ENCODE measurements at regions of chr11 and their contacts with region 1.

Region 1: GRCh38 chr11:122584670-122585069 is 70.9 kb upstream of the UBASH3B start:
- DNase-seq: no peak
- H3K4me3 ChIP-seq: no peak overlapping the region
- H3K27ac ChIP-seq: no peak overlapping the region
- H3K4me1 ChIP-seq: peaks cover 0 to 5% (median 2%) of the 10 kb centered on the region in 4 donors
- H3K27me3 ChIP-seq: no peaks in the 10 kb centered on the region
- CTCF ChIP-seq: no peak
- EP300 ChIP-seq: no peak
- POLR2A ChIP-seq: no peak

Region 2: DNA sequence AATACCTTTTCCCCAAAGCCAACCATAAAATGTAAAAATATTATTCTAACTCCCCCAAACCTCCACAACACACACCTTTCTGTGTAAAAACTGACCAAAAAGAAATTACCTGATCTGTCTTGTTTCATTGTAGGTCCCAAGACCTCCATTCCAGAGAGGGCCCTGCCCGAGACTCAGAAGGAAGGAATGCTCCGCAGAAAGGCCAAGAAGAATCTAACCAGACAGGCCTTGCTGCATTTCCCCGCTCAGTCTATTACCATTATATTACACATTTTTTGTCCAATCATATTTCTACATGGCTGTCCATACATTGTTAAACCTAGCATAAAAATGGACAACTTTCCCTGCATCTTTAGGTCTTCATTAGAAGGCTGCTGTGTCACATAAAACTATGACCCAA is 166.6 kb before region 1 on chr11:
- intact Hi-C with region 1: no loop called
- DNase-seq: no peak
- H3K4me3 ChIP-seq: no peak overlapping the region
- H3K27ac ChIP-seq: no peak overlapping the region
- H3K4me1 ChIP-seq: no peaks in the 10 kb centered on the region
- H3K27me3 ChIP-seq: no peaks in the 10 kb centered on the region
- CTCF ChIP-seq: no peak
- EP300 ChIP-seq: no peak
- POLR2A ChIP-seq: no peak

Region 3: GRCh38 chr11:122628810-122629555 is 44.3 kb after region 1 on chr11:
- intact Hi-C with region 1: loop called (anchors 5 kb)
- DNase-seq: peak; percentile 80
- H3K4me3 ChIP-seq: no peak overlapping the region
- H3K27ac ChIP-seq: no peak overlapping the region
- H3K4me1 ChIP-seq: peaks cover 0 to 12% (median 5%) of the 10 kb centered on the region in 4 donors
- H3K27me3 ChIP-seq: no peaks in the 10 kb centered on the region
- CTCF ChIP-seq: peak; percentile 69 to 80 (median 72)
- EP300 ChIP-seq: no peak
- POLR2A ChIP-seq: no peak